ENCODE measurements at regions of chr3 and their contacts with region 1.

Region 1: DNA sequence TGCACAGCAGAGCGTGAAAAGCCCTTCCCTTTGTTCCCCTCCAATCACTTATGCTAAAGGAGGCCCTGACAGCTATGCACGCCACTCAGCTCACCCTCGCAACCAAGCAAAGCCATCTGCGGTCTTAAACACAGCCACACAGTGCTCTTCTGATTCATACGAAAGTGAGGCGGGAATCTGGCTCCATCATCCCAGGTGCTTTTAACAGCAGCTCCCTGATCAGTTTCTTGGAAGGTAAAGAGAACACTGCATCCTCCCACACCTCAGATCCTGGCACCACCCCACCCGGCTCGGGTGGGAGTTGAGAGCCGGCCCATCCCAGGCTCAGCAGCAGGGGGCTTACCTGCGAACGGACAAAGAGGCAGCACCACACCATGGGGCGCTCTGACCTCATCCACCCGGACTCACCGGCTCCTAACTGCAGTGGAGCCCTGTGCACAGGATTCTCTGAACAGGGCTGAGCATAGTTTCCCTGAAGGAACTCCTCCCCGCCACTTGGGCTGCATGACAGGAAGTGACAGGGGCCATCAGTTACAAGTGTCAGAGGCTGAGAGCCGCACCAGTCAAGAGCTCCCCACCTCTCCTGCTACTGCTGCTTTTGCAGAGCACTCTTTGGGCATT is 114.3 kb upstream of the ARHGEF3 start:
- DNase-seq: peak; percentile 85
- H3K4me3 ChIP-seq: peak overlapping the region; percentile 73
- H3K27ac ChIP-seq: peak overlapping the region; percentile 97
- H3K4me1 ChIP-seq: peaks cover 66% of the 10 kb centered on the region
- CTCF ChIP-seq: peak; percentile 55

Region 2: GRCh38 chr3:56366641-56367162 is 549.4 kb before region 1 on chr3:
- CTCF ChIA-PET with region 1: no interaction called
- POLR2A ChIA-PET with region 1: no interaction called
- intact Hi-C with region 1: no loop called
- DNase-seq: no peak
- H3K4me3 ChIP-seq: no peak overlapping the region
- H3K27ac ChIP-seq: no peak overlapping the region
- H3K4me1 ChIP-seq: no peaks in the 10 kb centered on the region
- CTCF ChIP-seq: no peak

Region 3: GRCh38 chr3:56682462-56683121 is 233.5 kb before region 1 on chr3:
- CTCF ChIA-PET with region 1: no interaction called
- POLR2A ChIA-PET with region 1: no interaction called
- intact Hi-C with region 1: loop called (anchors 2 kb)
- DNase-seq: peak; percentile 86
- H3K4me3 ChIP-seq: peak overlapping the region; percentile 95
- H3K27ac ChIP-seq: peak overlapping the region; percentile 91
- H3K4me1 ChIP-seq: peaks cover 33% of the 10 kb centered on the region
- CTCF ChIP-seq: 0 out of 2 replicates have a peak, but pooled peaks have one; percentile 8

Region 4: GRCh38 chr3:56783644-56784447 is 132.2 kb before region 1 on chr3:
- CTCF ChIA-PET with region 1: no interaction called
- POLR2A ChIA-PET with region 1: interaction called, 3 read pairs
- intact Hi-C with region 1: loop called (anchors 5 kb)
- DNase-seq: peak; percentile 89
- H3K4me3 ChIP-seq: peak overlapping the region; percentile 30
- H3K27ac ChIP-seq: peak overlapping the region; percentile 52
- H3K4me1 ChIP-seq: peaks cover 60% of the 10 kb centered on the region
- CTCF ChIP-seq: no peak

Region 5: GRCh38 chr3:56855856-56856512 is 60.1 kb before region 1 on chr3:
- CTCF ChIA-PET with region 1: no interaction called
- POLR2A ChIA-PET with region 1: no interaction called
- intact Hi-C with region 1: loop called (anchors 2 kb)
- DNase-seq: peak; percentile 57
- H3K4me3 ChIP-seq: no peak overlapping the region
- H3K27ac ChIP-seq: no peak overlapping the region
- H3K4me1 ChIP-seq: peaks cover 24% of the 10 kb centered on the region
- CTCF ChIP-seq: peak; percentile 94

Region 6: GRCh38 chr3:56960234-56960917 is 44.3 kb after region 1 on chr3:
- CTCF ChIA-PET with region 1: no interaction called
- POLR2A ChIA-PET with region 1: interaction called, 45 read pairs
- intact Hi-C with region 1: loop called (anchors 1 kb)
- DNase-seq: no peak
- H3K4me3 ChIP-seq: no peak overlapping the region
- H3K27ac ChIP-seq: peak overlapping the region; percentile 6
- H3K4me1 ChIP-seq: peaks cover 76% of the 10 kb centered on the region
- CTCF ChIP-seq: no peak

Region 7: GRCh38 chr3:56988458-56989168 is 72.5 kb after region 1 on chr3:
- CTCF ChIA-PET with region 1: interaction called, 4 read pairs
- POLR2A ChIA-PET with region 1: interaction called, 5 read pairs
- intact Hi-C with region 1: loop called (anchors 2 kb)
- DNase-seq: peak; percentile 78
- H3K4me3 ChIP-seq: no peak overlapping the region
- H3K27ac ChIP-seq: no peak overlapping the region
- H3K4me1 ChIP-seq: peaks cover 40% of the 10 kb centered on the region
- CTCF ChIP-seq: peak; percentile 99

Region 8: DNA sequence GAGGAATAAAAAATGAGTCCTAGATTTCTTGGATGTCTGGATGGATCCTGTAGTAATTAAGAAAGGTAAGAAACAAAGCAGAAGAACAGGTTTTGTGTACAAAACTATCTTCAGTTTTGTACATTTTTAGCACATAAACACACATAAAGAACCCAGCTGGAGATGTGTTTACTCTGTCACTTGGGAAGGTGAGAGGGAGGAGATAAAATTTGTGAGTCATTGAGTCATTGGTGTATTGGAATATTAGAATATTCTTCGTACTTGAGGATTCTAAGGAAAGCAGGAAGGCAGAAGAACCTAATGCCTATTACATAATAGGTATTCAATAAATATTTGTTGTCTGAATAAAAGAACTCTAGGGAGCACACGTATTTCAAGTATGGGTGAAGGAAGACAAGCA is 328.9 kb after region 1 on chr3:
- CTCF ChIA-PET with region 1: no interaction called
- POLR2A ChIA-PET with region 1: no interaction called
- intact Hi-C with region 1: no loop called
- DNase-seq: no peak
- H3K4me3 ChIP-seq: no peak overlapping the region
- H3K27ac ChIP-seq: no peak overlapping the region
- H3K4me1 ChIP-seq: no peaks in the 10 kb centered on the region
- CTCF ChIP-seq: no peak